ENCODE measurements at regions of chr3 and their contacts with region 1.

Region 1: DNA sequence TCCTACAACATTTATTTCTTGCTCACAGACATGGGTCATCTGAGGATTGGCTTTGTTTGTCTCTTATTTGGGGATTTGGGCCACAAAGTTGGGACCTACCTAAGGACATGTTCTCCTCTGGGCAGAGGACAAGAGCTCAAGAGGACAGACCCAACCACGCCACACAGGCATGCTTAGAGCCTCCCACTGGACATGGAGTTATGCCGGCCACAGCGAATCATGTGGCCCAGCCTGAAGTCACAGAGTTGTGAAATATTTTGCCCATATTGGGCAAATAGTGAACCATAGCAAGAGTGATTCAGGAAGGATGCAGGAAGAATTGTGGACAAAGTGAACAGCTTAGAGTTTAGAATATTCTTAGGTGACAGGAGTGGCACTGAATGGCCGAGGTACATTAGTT is 9.9 kb downstream of the TRAK1 start:
- DNase-seq: peak; percentile 23 to 43
- ATAC-seq: peak; percentile 40 to 80 (median 61)
- H3K4me3 ChIP-seq: no peak overlapping the region
- H3K27ac ChIP-seq: peak overlapping the region in 9 of 10 donors; percentile 16 to 81 (median 63)
- H3K4me1 ChIP-seq: peaks cover 26 to 78% (median 68%) of the 10 kb centered on the region in 9 donors
- H3K27me3 ChIP-seq: no peaks in the 10 kb centered on the region
- CTCF ChIP-seq: no peak

Region 2: DNA sequence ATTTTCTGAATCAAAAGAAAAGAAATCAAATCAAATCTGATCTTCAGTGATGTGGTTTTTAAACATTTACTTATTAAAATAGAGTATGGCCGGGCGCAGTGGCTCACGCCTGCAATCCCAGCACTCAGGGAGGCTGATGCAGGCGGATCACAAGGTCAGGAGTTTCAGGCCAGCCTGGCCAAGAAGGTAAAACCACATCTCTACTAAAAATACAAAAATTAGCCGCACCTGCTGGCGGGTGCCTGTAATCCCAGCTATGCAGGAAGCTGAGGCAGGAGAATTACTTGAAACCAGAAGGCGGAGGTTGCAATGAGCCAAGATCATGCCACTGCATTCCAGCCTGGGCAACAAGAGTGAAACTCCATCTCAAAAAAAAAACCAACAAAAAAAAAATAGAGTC is 308.2 kb before region 1 on chr3:
- intact Hi-C with region 1: no loop called
- DNase-seq: no peak
- ATAC-seq: no peak
- H3K4me3 ChIP-seq: no peak overlapping the region
- H3K27ac ChIP-seq: no peak overlapping the region
- H3K4me1 ChIP-seq: peaks cover 0 to 10% (median 0%) of the 10 kb centered on the region in 9 donors
- H3K27me3 ChIP-seq: no peaks in the 10 kb centered on the region
- CTCF ChIP-seq: peak in 1 of 9 donors; percentile 8

Region 3: DNA sequence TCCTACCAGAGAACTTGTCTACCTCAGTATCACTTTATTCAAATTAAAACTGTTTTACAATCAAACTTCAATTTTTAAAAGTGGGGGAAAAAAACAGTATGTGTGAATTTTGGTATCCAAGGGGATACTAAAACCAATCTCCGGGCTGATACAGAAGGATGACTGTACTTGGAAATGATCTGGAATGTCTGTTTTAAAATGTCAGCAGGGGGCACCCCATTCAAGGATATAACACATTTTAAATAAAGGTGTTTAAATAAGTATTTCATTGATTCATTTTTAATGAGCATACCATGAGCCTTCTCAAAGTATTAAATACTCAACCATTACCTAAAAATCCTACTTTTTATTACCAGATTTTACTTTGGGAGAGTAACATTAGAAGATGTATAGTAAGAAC is 207.1 kb before region 1 on chr3:
- intact Hi-C with region 1: loop called in 9 of 10 experiments (anchors 1 to 5 kb)
- DNase-seq: peak in 1 of 2 donors; percentile 22
- ATAC-seq: no peak
- H3K4me3 ChIP-seq: no peak overlapping the region
- H3K27ac ChIP-seq: no peak overlapping the region
- H3K4me1 ChIP-seq: peaks cover 0 to 13% (median 0%) of the 10 kb centered on the region in 9 donors
- H3K27me3 ChIP-seq: no peaks in the 10 kb centered on the region
- CTCF ChIP-seq: peak in 8 of 9 donors; percentile 33 to 73 (median 60)

Region 4: GRCh38 chr3:41961750-41962679 is 139.0 kb before region 1 on chr3 and contains the start of gene ULK4:
- intact Hi-C with region 1: loop called in 3 of 10 experiments (anchors 5 kb)
- DNase-seq: peak; percentile 95 to 98
- ATAC-seq: peak; percentile 97 to 99 (median 98)
- H3K4me3 ChIP-seq: peak within 1 kb of the TSS; percentile 78 to 97 (median 93)
- H3K27ac ChIP-seq: peak within 1 kb of the TSS in 9 of 10 donors; percentile 46 to 87 (median 75)
- H3K4me1 ChIP-seq: peaks cover 0 to 18% (median 12%) of the 10 kb centered on the region in 9 donors
- H3K27me3 ChIP-seq: no peaks in the 10 kb centered on the region
- CTCF ChIP-seq: no peak
- total RNA-seq, gene ULK4: 1.8 to 11.4 (median 2.9) TPM

Region 5: DNA sequence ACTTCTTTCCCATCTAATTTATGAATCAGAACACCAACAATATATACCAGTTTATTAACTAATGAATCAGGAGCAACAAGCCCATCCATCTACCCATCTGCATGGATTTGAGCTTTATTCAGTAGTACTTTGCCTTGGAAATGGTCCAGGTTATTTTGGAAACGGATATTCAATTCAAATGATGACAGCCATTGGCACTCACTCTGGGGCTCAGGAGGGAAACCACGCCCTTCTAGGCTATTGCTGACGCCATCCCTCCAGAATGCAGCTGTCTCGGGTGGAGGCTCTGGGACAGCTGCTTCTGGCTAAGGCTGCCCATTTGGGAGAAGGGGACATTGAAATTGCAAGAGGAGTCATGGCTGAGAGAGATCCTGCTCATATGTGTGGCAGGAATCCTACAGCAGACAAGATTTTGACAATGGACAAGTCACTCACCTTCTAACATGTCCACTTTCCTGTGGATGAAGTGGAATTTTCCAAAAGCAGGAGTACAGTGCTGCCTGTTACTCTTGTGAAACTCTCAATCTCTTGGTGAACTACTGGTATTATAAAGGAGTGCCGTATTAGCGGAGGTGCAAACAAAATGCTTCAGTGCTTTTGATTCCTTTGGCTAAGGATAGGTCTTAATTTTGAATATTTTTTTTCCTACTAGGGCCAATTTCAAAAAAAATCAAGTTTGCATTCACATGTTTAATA is 39.2 kb before region 1 on chr3:
- intact Hi-C with region 1: loop called in 2 of 10 experiments (anchors 2 to 5 kb)
- DNase-seq: peak; percentile 74 to 93
- ATAC-seq: peak; percentile 88 to 94 (median 91)
- H3K4me3 ChIP-seq: peak overlapping the region in 4 of 10 donors; percentile 0 to 35 (median 20)
- H3K27ac ChIP-seq: peak overlapping the region; percentile 59 to 95 (median 90)
- H3K4me1 ChIP-seq: peaks cover 19 to 100% (median 90%) of the 10 kb centered on the region in 9 donors
- H3K27me3 ChIP-seq: no peaks in the 10 kb centered on the region
- CTCF ChIP-seq: no peak

Region 6: GRCh38 chr3:42184651-42185443 is 83.8 kb after region 1 on chr3:
- intact Hi-C with region 1: loop called in 1 of 10 experiments (anchors 5 kb)
- DNase-seq: no peak
- ATAC-seq: no peak
- H3K4me3 ChIP-seq: no peak overlapping the region
- H3K27ac ChIP-seq: peak overlapping the region in 2 of 10 donors; percentile 9 to 30
- H3K4me1 ChIP-seq: peaks cover 0 to 87% (median 58%) of the 10 kb centered on the region in 9 donors
- H3K27me3 ChIP-seq: no peaks in the 10 kb centered on the region
- CTCF ChIP-seq: no peak

Measured in heart right ventricle (tissue), 16 donors.